ENCODE measurements at regions of chr4 and their contacts with region 1.

Region 1: DNA sequence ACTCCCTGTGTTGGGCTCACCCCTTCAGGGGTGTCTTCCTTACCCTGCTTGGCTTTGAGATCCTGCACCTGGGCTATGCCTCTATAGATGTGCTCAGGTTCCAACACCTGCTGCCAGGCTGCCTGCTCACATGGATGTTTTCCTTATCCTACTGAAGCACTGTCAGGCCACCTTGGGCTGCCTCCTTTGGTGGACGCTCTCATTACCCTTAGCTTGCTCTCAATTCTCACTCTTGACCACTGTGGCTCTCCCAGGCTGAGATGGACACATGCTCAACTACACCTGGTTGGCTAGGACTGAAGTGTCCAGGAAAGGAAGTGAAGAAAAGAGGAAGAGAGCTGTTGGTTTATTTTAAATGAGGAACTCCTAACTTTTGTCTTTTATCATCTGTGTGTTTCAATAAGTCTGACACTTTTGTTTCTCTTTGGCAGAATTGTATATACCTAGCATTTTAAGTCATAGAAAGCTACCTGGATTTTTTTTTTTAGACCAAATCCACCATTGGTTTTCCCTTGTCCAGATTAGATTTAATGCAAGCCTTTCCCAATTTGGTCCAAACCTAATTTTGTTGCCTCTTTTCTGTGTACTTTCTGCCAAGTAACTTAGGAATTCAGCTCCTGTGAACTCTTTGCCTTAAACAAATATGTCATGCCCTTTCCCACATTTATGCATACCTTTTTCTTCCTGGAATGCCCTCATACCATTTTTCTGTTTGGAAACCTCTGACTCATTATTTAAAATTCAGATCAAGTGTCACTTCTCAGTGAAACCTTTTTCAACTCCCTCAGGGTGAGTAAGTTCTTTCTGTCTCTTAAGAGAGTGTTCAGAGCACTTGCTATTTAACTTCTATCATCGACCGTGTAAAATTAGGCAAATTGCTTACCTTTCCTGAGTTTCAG is 175.8 kb downstream of the GC start:
- DNase-seq: peak; percentile 99
- ATAC-seq: peak; percentile 89
- H3K4me3 ChIP-seq: peak overlapping the region; percentile 32; the same call in 1 of the 2 replicates
- H3K27ac ChIP-seq: peak overlapping the region; percentile 90
- H3K4me1 ChIP-seq: peaks cover 45% of the 10 kb centered on the region
- H3K27me3 ChIP-seq: no peaks in the 10 kb centered on the region
- CTCF ChIP-seq: no peak

Region 2: GRCh38 chr4:71270901-71271300 is 337.1 kb before region 1 on chr4:
- CTCF ChIA-PET with region 1: no interaction called
- POLR2A ChIA-PET with region 1: no interaction called
- intact Hi-C with region 1: loop called (anchors 2 kb)
- DNase-seq: peak; percentile 73
- ATAC-seq: peak; percentile 91
- H3K4me3 ChIP-seq: no peak overlapping the region
- H3K27ac ChIP-seq: no peak overlapping the region
- H3K4me1 ChIP-seq: no peaks in the 10 kb centered on the region; the same call in 1 of the 2 replicates
- H3K27me3 ChIP-seq: no peaks in the 10 kb centered on the region
- CTCF ChIP-seq: peak; percentile 81

Region 3: DNA sequence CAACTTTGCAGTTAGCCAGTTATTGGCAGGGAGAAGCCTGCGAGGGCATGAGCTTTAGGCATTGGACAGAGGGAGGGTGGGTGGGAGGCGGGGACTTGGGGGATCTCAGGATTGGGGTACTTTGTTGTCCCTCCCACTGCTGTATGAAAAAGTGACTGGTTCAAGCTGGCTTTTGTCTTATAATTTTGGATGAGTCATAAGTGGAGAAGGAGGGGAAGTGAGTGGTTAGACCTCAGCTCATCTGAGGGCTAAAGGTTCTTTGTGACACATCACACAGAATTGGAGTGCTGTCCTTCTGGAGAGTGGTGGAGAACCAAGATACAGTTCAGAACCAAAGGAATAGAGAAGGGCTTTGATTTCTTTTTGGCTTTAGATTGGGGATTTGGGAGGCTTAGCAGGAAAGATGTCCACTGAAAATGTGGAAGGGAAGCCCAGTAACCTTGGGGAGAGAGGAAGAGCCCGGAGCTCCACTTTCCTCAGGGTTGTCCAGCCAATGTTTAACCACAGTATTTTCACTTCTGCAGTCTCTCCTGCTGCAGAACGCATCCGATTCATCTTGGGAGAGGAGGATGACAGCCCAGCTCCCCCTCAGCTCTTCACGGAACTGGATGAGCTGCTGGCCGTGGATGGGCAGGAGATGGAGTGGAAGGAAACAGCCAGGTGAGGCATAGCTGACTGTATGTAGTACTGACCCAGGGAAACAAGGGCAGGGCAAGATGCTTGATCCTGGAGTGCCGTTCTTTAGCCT is 269.0 kb before region 1 on chr4 and contains the start of gene SLC4A4:
- CTCF ChIA-PET with region 1: no interaction called
- POLR2A ChIA-PET with region 1: no interaction called
- intact Hi-C with region 1: no loop called
- DNase-seq: peak; percentile 72
- ATAC-seq: peak; percentile 83
- H3K4me3 ChIP-seq: no peak within 1 kb of the TSS
- H3K27ac ChIP-seq: no peak within 1 kb of the TSS
- H3K4me1 ChIP-seq: peaks cover 17% of the 10 kb centered on the region
- H3K27me3 ChIP-seq: no peaks in the 10 kb centered on the region
- CTCF ChIP-seq: no peak
- total RNA-seq, gene SLC4A4: 0.47 and 0.52 TPM in 2 replicates

Region 4: GRCh38 chr4:71377561-71377960 is 230.5 kb before region 1 on chr4:
- CTCF ChIA-PET with region 1: no interaction called
- POLR2A ChIA-PET with region 1: no interaction called
- intact Hi-C with region 1: loop called (anchors 5 kb)
- DNase-seq: peak; percentile 96
- ATAC-seq: peak; percentile 98
- H3K4me3 ChIP-seq: no peak overlapping the region
- H3K27ac ChIP-seq: peak overlapping the region; percentile 39
- H3K4me1 ChIP-seq: peaks cover 21% of the 10 kb centered on the region
- H3K27me3 ChIP-seq: no peaks in the 10 kb centered on the region
- CTCF ChIP-seq: no peak

Region 5: DNA sequence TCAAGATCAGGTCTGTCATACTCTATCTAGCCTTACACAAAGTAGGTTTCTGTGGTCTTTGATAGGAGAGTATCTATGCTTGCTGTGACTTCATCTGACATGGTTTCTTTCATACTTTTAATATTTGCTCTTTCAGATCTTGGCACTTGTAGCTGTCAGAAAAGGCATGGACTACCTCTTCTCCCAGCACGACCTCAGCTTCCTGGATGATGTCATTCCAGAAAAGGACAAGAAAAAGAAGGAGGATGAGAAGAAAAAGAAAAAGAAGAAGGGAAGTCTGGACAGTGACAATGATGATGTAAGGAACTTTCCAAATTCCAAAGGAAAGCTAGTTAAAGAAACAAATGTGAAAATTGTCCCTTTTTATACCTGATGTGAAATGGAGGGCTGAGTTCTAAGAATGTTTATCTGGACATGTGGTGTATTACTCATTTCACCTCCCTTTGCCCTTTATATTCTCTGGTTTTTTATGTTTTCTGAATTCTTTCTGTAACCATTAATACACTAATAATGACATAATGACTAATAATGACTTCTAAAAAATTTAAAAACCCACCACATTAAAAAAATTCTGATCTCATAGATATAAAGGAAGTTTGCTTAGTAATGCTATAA is 48.0 kb before region 1 on chr4:
- CTCF ChIA-PET with region 1: no interaction called
- POLR2A ChIA-PET with region 1: no interaction called
- intact Hi-C with region 1: loop called (anchors 1 kb)
- DNase-seq: peak; percentile 85
- ATAC-seq: peak; percentile 85
- H3K4me3 ChIP-seq: no peak overlapping the region
- H3K27ac ChIP-seq: peak overlapping the region; percentile 93
- H3K4me1 ChIP-seq: peaks cover 37% of the 10 kb centered on the region
- H3K27me3 ChIP-seq: no peaks in the 10 kb centered on the region
- CTCF ChIP-seq: no peak

Region 6: GRCh38 chr4:71689822-71690221 is 81.8 kb after region 1 on chr4:
- CTCF ChIA-PET with region 1: no interaction called
- POLR2A ChIA-PET with region 1: no interaction called
- intact Hi-C with region 1: loop called (anchors 2 kb)
- DNase-seq: no peak
- ATAC-seq: no peak
- H3K4me3 ChIP-seq: no peak overlapping the region
- H3K27ac ChIP-seq: no peak overlapping the region
- H3K4me1 ChIP-seq: no peaks in the 10 kb centered on the region
- H3K27me3 ChIP-seq: no peaks in the 10 kb centered on the region
- CTCF ChIP-seq: no peak